A549 (cell line): ENCODE measurements at regions of chr3 and their contacts with region 1.

Region 1: DNA sequence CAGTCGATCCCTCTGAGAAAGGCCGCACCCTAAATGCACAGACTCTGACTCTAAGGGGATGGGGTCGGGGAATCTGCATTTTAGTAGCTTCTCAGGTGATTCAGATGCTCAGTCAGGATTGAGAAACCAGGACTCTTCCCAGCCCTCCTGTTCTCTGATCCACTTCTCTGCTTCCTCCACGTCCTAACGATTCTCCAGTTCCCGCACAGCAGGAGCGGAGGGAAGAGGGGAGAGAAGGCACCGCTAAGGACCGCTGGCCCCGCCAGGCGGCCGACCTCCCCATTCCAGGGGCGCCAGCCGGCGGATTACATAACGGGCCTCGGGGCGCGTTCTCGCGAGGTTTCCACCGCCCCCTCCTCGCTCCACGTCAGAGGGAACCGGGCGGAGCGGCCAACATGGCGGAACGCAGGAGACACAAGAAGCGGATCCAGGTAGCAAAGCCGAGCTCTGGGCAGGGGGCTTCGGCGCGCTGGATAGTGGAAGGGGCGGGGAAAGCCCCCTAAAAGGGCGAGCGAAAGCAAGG is at the start of gene SEC62:
- DNase-seq: peak; percentile 88 to 91
- ATAC-seq: peak; percentile 97
- H3K4me3 ChIP-seq: peak within 1 kb of the TSS; percentile 96
- H3K27ac ChIP-seq: peak within 1 kb of the TSS; percentile 94 to 98
- H3K4me1 ChIP-seq: peaks cover 17% of the 10 kb centered on the region
- CTCF ChIP-seq: no peak; the same call in 2 of the 3 replicates
- EP300 ChIP-seq: no peak
- POLR2A ChIP-seq: peak; percentile 94
- RAD21 ChIP-seq: peak; percentile 37 to 52
- polyA plus RNA-seq, gene SEC62: 84.5 and 88.1 TPM in 2 replicates

Region 2: GRCh38 chr3:169764452-169765274 is 201.8 kb before region 1 on chr3 and contains the start of gene TERC:
- CTCF ChIA-PET with region 1: interaction called, 7 read pairs
- POLR2A ChIA-PET with region 1: interaction called, 12 read pairs
- DNase-seq: peak; percentile 83 to 95
- ATAC-seq: peak; percentile 83 to 93
- H3K4me3 ChIP-seq: peak within 1 kb of the TSS; percentile 92
- H3K27ac ChIP-seq: peak within 1 kb of the TSS; percentile 95 to 99
- H3K4me1 ChIP-seq: no peaks in the 10 kb centered on the region
- CTCF ChIP-seq: no peak
- EP300 ChIP-seq: no peak
- POLR2A ChIP-seq: peak; percentile 76
- RAD21 ChIP-seq: no peak
- polyA plus RNA-seq, gene TERC: 2.2 TPM in 1 of 2 replicates, not detected in the other

Region 3: DNA sequence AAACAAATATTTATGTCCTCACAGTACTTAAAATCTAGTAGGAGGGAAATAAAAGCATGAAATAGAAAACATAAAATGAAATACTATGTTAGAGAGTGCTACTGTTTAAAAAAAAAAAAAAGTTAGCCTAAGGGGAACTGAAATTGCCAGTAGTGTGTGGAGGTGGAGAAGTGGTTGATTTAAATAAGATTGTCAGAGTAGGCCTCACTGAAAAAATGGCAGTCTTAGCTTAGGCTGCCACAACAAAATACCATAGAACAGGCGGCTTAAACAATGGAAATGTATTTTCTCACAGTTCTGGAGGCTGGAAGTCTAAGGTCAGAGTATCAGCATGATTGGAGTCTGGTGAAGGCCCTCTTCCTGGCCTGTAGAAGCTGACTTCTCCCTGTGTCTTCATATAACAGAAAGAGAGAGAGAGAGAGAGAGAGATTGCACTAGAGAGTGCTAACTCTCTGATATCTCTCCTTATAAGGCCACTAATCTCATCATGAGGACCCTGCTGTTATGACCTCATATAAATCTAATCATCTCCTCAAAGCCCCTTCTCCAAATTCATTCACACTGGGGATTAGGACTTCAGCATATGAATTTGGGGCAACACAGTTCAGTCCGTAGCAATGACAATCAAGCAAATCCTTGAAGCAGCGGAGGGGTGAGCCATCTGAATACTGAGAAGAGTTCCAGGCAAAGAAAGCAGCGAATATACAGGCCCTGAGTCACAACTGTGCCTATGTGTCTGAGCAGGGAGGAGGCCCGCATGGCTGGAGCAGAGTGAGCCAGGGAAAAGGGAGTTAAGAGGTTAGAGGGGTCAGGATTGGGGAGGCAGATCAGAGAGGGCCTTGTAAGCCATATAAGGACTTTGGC is 130.2 kb before region 1 on chr3:
- CTCF ChIA-PET with region 1: no interaction called
- POLR2A ChIA-PET with region 1: no interaction called
- DNase-seq: no peak
- ATAC-seq: no peak
- H3K4me3 ChIP-seq: no peak overlapping the region
- H3K27ac ChIP-seq: no peak overlapping the region
- H3K4me1 ChIP-seq: no peaks in the 10 kb centered on the region
- CTCF ChIP-seq: no peak
- EP300 ChIP-seq: no peak
- POLR2A ChIP-seq: no peak
- RAD21 ChIP-seq: no peak

Region 4: DNA sequence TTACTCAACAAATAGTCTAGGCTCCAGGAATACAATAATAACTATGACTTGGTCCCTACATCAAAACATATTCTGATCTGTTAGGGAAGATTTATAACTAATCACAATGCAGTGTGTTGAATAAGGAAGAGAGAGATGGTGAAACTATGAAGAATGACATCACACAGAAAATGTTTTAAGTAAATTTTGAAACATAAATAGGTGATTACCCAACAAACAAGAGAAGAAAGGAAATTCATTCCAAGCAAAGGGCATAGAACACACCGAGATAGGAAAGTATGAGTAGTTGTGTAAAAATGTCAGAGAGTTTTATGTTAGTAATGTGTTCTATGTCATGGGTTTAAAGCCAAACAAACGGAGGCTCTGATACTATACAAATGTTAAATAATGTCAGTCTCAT is 13.6 kb after region 1 on chr3:
- CTCF ChIA-PET with region 1: interaction called, 10 read pairs
- POLR2A ChIA-PET with region 1: interaction called, 7 read pairs
- DNase-seq: no peak
- ATAC-seq: peak; percentile 36 to 59; a peak in 3 of 6 replicates
- H3K4me3 ChIP-seq: no peak overlapping the region
- H3K27ac ChIP-seq: no peak overlapping the region
- H3K4me1 ChIP-seq: peaks cover 15% of the 10 kb centered on the region; the same call in 2 of the 3 replicates
- CTCF ChIP-seq: no peak
- EP300 ChIP-seq: no peak
- POLR2A ChIP-seq: no peak
- RAD21 ChIP-seq: no peak

Region 5: GRCh38 chr3:170007031-170007663 is 40.7 kb after region 1 on chr3:
- CTCF ChIA-PET with region 1: no interaction called
- POLR2A ChIA-PET with region 1: no interaction called
- DNase-seq: no peak
- ATAC-seq: no peak
- H3K4me3 ChIP-seq: no peak overlapping the region
- H3K27ac ChIP-seq: no peak overlapping the region
- H3K4me1 ChIP-seq: no peaks in the 10 kb centered on the region
- CTCF ChIP-seq: no peak
- EP300 ChIP-seq: no peak
- POLR2A ChIP-seq: no peak
- RAD21 ChIP-seq: no peak

Region 6: DNA sequence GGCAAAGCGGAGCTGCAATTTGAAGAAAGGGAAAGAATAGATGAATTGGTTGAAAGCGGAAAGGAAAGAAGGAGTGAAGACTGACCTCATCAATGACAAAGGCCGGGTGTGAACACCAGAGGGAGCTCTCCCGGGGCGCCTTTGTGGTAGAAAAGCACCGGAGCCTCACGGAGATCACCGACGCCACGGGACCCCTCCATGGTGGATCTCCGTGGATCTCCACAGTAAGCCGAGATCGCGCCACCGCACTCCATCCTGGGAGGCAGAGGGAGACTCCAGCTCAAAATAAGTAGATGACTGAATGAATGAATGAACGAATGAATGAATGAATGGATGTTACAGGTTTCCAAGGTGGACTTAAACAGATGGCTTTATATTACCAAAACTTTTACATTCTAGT is 96.3 kb after region 1 on chr3:
- CTCF ChIA-PET with region 1: no interaction called
- POLR2A ChIA-PET with region 1: no interaction called
- DNase-seq: no peak
- ATAC-seq: peak in 1 of 2 experiments; percentile 62; a peak in 3 of 6 replicates
- H3K4me3 ChIP-seq: no peak overlapping the region
- H3K27ac ChIP-seq: no peak overlapping the region
- H3K4me1 ChIP-seq: no peaks in the 10 kb centered on the region
- CTCF ChIP-seq: 0 out of 3 replicates have a peak, but pooled peaks have one; percentile 17
- EP300 ChIP-seq: no peak
- POLR2A ChIP-seq: no peak
- RAD21 ChIP-seq: no peak